GM10248 (cell line): ENCODE measurements at regions of chr12 and their contacts with region 1.

Region 1: GRCh38 chr12:52884526-52885293 is 20.2 kb downstream of the KRT8 start:
- DNase-seq: peak; percentile 83
- CTCF ChIP-seq: peak; percentile 82

Region 2: DNA sequence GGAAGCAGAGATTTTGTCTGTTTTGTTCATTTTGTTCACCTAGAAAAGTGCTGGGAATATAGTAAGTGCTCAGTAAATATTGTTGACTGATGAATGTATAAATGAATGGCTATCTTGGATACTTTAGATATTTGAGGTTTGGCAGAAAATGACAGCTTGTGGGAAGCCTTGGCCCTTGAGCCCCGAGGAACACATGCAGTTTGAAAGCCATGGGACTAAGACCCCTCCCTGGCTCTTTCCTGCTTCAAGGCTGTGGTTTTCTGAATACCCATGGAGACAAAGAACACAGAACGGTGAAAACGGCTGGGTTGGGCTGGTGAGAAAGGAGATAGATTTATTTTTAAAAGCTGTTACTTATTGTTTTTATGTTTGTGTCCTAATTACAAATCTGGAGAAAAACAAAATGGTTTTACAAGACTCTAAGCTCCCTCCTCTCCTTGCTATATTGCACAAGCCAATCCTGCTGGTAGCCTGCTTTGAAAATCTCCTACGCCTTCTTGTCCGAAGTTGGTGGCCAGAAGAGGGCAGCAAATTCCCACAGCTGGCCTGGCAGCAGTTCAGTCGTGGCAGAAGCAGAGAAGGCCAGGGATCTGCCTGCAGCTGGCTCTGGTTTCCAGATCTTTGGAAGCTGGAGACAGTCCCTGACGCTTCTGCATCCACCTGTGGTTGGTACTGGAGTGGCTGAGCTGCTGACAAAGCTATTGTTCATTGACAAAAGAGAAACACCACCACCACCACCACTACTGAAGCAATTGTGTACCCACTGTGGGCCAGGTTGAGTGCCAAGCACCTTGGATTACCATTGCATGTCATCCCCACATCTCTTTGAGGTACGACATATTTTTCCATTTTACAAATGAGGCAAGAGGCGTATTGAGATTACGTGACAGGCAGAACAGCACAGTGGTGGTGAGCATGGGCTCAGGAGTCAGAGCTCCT is 512.2 kb before region 1 on chr12:
- CTCF ChIA-PET with region 1: interaction called, 53 read pairs
- POLR2A ChIA-PET with region 1: no interaction called
- DNase-seq: peak; percentile 69
- CTCF ChIP-seq: peak; percentile 79

Region 3: DNA sequence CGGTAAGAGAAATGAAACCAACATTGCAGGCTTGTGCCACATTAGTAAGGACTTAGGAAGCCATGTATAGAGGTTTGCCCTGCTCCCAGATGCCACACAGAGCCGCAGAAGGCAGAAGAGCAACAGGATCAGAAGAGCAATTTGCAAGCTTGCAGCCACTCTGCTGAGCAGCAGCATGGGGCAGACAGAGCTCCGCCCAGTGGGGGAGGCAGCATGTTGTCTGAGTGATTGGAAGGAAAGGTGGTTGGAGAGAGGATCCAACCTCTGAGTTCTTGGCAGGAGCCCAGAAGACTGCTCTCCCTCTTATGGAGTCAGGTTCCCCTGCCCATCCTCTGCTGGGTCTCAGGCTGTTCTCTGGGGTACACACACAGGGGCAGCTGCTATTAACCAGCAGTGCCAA is 389.3 kb before region 1 on chr12:
- CTCF ChIA-PET with region 1: no interaction called
- POLR2A ChIA-PET with region 1: no interaction called
- DNase-seq: no peak
- CTCF ChIP-seq: no peak

Region 4: DNA sequence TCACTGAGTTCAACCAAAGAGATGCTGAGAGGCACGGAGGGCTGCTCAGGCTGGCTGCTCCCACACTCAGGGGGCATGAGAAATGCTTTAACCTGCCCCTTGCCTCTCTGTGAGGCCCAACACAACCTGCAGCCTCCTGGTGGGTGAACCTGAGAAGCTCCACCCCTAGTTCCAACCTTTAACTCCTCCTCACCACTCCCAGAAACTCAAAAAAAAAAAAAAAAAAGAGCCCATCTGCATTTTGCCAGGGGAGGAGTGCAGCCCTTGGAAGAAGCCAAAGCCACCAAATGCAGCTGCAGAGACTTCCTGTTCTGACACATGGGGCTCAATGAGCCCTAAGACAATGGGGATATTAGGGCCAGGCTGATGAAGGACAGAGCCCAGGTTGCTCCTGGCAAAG is 79.7 kb before region 1 on chr12:
- CTCF ChIA-PET with region 1: no interaction called
- POLR2A ChIA-PET with region 1: no interaction called
- DNase-seq: no peak
- CTCF ChIP-seq: no peak

Region 5: DNA sequence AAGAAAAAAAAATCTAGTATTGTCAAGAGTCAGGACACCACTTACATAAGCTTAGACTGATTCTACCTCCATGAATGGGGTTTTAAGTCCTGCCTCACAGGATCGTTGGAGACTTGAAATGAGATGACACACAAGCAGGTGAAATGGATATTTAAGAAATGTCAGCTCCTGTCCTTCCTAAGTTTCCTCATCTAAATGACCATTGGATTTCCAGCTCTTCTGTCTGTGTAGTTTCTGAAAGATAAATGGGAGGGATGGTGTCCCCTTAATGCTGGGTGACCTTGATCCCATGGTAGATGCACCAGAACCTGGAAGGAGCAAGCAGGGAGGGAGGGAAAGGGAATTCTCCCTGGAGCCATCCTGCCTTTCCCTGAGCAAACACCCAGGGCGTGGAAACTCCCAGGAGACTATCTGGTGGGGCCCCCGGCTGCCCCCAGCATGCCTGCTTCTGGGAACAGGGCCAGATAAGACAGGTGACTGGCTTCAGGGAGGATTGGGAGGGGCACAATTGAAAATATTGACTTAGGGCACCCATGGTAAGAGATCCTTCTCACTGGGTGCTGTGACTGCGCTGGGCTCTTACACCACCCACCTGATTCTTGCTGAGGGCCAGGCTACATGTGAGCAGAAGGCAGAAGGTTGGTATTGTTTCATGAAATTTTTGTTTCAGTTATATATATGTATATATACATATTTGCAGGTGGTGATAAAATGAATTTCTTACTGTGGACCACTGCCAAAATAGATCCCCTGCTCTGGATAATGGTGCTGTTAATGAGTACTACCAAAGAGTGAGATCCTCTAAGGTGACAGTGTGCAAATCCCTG is 10.6 kb after region 1 on chr12:
- CTCF ChIA-PET with region 1: interaction called, 105 read pairs
- POLR2A ChIA-PET with region 1: no interaction called
- DNase-seq: no peak
- CTCF ChIP-seq: no peak

Region 6: GRCh38 chr12:52918351-52918750 is 33.6 kb after region 1 on chr12:
- CTCF ChIA-PET with region 1: interaction called, 24 read pairs
- POLR2A ChIA-PET with region 1: no interaction called
- DNase-seq: no peak
- CTCF ChIP-seq: no peak

Region 7: GRCh38 chr12:52949413-52950331 is 65.0 kb after region 1 on chr12:
- CTCF ChIA-PET with region 1: interaction called, 21 read pairs
- POLR2A ChIA-PET with region 1: no interaction called
- DNase-seq: no peak
- CTCF ChIP-seq: no peak